ENCODE measurements at regions of chr18 and their contacts with region 1.

Region 1: GRCh38 chr18:3151399-3152264 is 68.1 kb downstream of the MYOM1 start:
- DNase-seq: peak; percentile 50
- ATAC-seq: peak; percentile 33
- H3K4me3 ChIP-seq: no peak overlapping the region
- H3K4me3 Mint-ChIP-seq: no peak overlapping the region
- H3K27ac ChIP-seq: no peak overlapping the region
- H3K27ac Mint-ChIP-seq: no peak overlapping the region
- H3K4me1 ChIP-seq: no peaks in the 10 kb centered on the region
- H3K4me1 Mint-ChIP-seq: peaks cover 7% of the 10 kb centered on the region
- H3K27me3 ChIP-seq: no peaks in the 10 kb centered on the region
- H3K27me3 Mint-ChIP-seq: no peaks in the 10 kb centered on the region
- CTCF ChIP-seq: peak; percentile 95

Region 2: DNA sequence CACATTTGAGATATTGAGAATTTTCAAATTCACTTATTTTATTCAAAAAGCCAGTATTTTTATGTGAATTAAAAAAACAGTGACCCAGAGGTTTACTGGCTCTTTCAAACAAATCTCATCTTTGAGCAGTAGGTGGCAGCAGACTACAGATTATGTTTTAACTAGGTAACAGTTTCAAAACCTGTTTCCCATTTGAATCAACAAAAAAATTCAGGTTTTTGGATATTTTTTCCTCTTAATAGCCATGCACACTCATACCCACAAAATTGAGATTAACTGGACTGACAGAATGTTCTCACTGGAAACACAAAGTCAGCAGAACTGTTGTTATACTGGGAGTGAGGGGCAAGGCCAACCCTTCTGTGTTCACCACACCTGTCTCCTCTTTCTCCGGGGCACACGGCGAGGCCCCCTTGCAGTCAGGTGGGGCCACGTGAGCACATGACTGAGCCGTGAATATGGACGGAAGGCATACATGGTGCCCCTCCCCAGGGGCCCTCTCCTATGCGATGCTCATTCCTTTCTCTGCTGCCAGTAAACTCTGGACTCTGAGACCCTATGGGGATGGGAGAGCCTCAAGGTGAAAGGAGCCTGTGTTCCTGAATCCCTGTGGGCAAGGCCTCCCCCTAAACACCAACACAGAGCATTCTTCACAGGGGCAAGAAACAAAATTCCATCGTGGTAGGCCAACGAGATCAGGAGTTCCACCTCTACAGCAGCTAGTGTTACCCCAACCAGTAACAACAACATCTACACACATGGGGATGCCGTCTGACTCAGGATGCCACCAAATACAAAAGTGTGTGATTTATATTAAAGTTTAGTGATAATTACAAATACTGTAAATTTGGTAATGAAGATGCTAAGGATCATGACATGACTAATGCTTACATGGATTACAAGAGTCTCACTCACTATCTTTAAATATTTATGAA is 219.1 kb before region 1 on chr18:
- CTCF ChIA-PET with region 1: interaction called, 7 read pairs
- POLR2A ChIA-PET with region 1: no interaction called
- intact Hi-C with region 1: loop called (anchors 1 kb)
- DNase-seq: peak; percentile 78
- ATAC-seq: peak; percentile 73
- H3K4me3 ChIP-seq: no peak overlapping the region
- H3K4me3 Mint-ChIP-seq: no peak overlapping the region
- H3K27ac ChIP-seq: no peak overlapping the region
- H3K27ac Mint-ChIP-seq: peak overlapping the region; percentile 64
- H3K4me1 ChIP-seq: peaks cover 0 to 4% of the 10 kb centered on the region in 2 donors
- H3K4me1 Mint-ChIP-seq: peaks cover 8% of the 10 kb centered on the region
- H3K27me3 ChIP-seq: no peaks in the 10 kb centered on the region
- H3K27me3 Mint-ChIP-seq: no peaks in the 10 kb centered on the region
- CTCF ChIP-seq: peak; percentile 92

Region 3: DNA sequence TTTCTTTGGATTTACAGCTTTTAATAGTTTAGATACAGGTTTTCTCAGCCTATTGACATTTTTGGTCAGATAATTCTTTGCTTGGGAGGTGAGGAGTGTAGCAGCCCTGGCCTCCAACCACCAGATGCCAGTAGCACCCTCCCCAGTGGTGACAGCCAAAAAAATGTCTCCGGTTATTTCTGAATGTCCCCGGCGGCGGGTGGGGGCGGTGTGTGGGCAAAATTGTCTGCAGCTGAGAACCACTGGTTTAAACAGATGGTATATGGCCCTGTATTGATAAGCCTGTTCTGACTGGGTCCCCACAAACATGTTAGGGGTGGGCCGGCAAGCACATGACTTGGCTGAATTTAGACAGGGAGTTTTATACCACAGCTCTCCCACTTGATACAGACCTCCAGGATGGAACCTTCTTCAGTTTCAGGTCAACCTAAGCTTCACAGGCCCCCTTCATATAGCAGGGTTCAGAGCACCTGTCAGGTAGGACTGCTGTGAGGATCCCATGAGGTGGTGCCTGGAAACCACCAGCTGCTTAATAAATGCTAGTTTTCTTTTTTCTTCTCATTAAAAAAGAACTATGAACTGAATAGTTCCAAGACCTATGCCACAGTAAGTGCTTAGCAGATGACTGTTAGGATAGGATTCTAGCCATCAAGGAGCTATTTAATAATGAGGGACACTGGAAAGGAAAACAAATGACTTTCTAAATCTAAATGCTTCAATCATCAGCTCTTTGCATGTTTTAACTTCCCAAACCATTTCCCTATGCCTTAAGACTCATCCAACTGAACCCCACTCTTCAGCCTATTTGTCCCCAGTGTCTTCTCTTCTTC is 156.8 kb before region 1 on chr18:
- CTCF ChIA-PET with region 1: interaction called, 46 read pairs
- POLR2A ChIA-PET with region 1: no interaction called
- intact Hi-C with region 1: loop called (anchors 5 kb)
- DNase-seq: peak; percentile 81
- ATAC-seq: peak; percentile 95
- H3K4me3 ChIP-seq: peak overlapping the region in 3 of 5 experiments; percentile 12 to 38 (median 21)
- H3K4me3 Mint-ChIP-seq: peak overlapping the region; percentile 50
- H3K27ac ChIP-seq: peak overlapping the region in 1 of 2 donors; percentile 4
- H3K27ac Mint-ChIP-seq: peak overlapping the region; percentile 29
- H3K4me1 ChIP-seq: peaks cover 9 to 14% of the 10 kb centered on the region in 2 donors
- H3K4me1 Mint-ChIP-seq: peaks cover 35% of the 10 kb centered on the region
- H3K27me3 ChIP-seq: no peaks in the 10 kb centered on the region
- H3K27me3 Mint-ChIP-seq: no peaks in the 10 kb centered on the region
- CTCF ChIP-seq: peak; percentile 68

Region 4: GRCh38 chr18:3162181-3162580 is 10.5 kb after region 1 on chr18:
- CTCF ChIA-PET with region 1: interaction called, 10 read pairs
- POLR2A ChIA-PET with region 1: no interaction called
- intact Hi-C with region 1: no loop called
- DNase-seq: no peak
- ATAC-seq: no peak
- H3K4me3 ChIP-seq: no peak overlapping the region
- H3K4me3 Mint-ChIP-seq: no peak overlapping the region
- H3K27ac ChIP-seq: no peak overlapping the region
- H3K27ac Mint-ChIP-seq: no peak overlapping the region
- H3K4me1 ChIP-seq: no peaks in the 10 kb centered on the region
- H3K4me1 Mint-ChIP-seq: no peaks in the 10 kb centered on the region
- H3K27me3 ChIP-seq: no peaks in the 10 kb centered on the region
- H3K27me3 Mint-ChIP-seq: no peaks in the 10 kb centered on the region
- CTCF ChIP-seq: no peak

Region 5: DNA sequence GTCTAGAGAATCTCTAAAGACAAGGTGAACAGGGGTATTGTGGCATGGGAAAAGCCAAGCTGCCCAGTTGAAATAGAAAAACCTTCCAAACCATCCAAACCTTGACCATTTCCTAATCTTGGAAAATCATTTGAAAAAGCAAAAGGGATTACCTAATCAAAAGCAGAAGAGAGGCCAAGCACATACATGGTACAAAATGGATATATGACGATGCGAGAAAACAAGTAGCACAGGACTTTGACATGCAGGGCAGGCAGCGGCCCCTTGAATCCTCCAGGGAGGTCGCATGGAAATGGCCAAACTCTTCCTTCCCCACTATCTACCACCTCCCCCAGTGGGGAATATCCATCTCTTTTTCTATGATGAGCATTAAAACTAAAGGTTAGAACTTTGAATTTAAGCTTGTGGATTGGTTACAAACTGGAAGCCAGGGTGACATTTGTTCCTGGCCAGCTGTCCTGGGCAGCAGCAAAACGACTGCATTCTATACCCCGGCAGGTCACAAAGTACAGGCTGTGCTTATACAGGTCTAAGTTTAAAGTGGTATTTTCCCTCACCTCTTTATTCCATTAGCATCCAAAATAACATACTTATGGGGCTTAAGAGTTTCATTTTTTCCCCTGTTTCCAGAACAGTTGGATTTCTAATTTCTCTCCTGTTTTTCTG is 43.4 kb after region 1 on chr18:
- CTCF ChIA-PET with region 1: interaction called, 6 read pairs
- POLR2A ChIA-PET with region 1: interaction called, 3 read pairs
- intact Hi-C with region 1: loop called (anchors 5 kb)
- DNase-seq: no peak
- ATAC-seq: no peak
- H3K4me3 ChIP-seq: no peak overlapping the region
- H3K4me3 Mint-ChIP-seq: no peak overlapping the region
- H3K27ac ChIP-seq: no peak overlapping the region
- H3K27ac Mint-ChIP-seq: no peak overlapping the region
- H3K4me1 ChIP-seq: no peaks in the 10 kb centered on the region
- H3K4me1 Mint-ChIP-seq: no peaks in the 10 kb centered on the region
- H3K27me3 ChIP-seq: no peaks in the 10 kb centered on the region
- H3K27me3 Mint-ChIP-seq: peaks cover 4% of the 10 kb centered on the region
- CTCF ChIP-seq: no peak